GM10248 (cell line): ENCODE measurements at regions of chr2 and their contacts with region 1.

Region 1: DNA sequence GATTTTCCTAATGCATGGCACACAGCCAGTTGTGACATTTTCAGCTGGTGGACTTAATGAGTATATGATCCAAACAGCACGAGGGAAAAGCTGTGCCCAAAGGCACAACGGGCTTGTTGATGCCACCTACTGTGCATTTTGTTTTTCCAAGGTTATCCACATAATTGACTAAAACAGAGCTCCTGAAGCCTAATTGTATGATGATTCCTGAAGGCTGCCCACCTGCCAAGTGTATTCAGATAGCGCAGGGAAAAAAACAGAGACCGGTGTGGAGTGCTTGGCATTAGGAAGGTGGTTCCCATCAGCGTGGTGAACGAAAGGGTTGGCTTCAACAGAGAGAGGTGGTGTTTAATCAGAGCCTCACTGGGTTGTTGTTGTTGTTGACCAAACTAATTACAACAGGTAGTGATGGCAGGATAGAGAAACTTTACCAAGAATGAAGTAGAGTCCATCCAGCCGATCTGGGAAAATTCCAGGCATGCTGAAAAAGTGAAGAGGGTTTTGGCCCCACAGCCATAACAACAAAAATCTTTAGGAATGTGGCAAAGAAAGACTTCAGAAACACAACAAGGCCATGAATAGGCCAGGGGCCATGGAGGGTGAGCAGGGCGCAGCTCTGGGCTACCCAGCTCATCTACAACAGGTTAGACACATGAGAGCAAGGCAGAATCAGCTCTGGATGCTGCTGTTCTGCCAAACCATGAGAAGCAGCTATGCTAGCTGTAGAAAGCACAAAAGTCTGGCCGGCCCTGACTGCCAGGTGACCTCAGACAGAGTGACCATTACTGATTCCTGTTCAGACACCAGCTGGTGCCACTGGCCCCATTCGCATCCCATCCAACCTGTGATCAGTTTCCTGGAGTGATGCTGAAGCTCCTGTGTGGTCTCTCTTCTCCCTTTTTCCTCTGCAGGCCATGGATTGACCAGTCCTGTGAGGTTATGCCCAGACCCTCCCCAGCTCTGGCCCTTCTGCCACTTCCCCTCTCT is 14.6 kb downstream of the RBMS1 start:
- DNase-seq: no peak
- CTCF ChIP-seq: no peak

Region 2: DNA sequence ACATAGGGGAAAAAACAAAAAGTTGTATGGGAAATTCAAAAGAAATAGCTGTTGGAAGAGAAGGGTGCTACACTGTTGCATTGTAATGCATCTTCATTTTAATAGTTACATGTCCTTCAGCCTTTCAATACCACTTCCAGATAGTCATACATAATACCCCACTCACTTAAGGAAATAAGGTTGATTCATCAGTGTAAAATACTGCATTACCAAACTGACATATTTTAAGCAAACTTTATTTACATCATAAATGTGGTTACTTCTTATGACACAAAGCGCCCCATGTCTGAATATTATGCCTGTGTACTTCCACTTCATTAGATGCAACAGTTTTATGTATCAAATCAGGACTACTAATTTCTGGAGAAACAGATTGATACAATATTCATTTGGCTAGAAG is 10.1 kb after region 1 on chr2:
- CTCF ChIA-PET with region 1: interaction called, 12 read pairs
- POLR2A ChIA-PET with region 1: no interaction called
- DNase-seq: no peak
- CTCF ChIP-seq: no peak

Region 3: DNA sequence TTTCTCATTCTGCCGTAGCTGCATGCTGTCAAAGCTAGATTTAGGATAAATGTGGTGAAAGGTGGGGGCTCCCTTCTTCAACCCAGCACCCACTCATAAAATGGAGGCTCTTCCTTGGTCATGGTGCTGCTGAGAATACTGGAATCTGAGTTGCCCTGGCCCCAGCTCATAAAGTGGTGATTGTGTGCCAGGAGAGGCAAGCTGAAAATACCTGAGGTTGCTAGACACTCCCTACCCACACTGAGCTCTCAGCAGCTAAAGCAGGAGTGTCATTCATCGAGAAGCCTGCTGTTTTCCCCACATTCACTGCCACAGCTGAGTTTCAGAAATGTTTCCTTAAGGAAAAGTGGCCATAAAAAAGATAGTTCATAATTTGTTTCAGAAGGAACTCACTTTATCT is 311.8 kb after region 1 on chr2:
- CTCF ChIA-PET with region 1: no interaction called
- POLR2A ChIA-PET with region 1: no interaction called
- DNase-seq: no peak
- CTCF ChIP-seq: no peak